ENCODE measurements at regions of chr4 and their contacts with region 1.

Region 1: GRCh38 chr4:119284876-119285780 is 36.8 kb downstream of the FABP2 start:
- DNase-seq: no peak
- ATAC-seq: peak; percentile 56

Region 2: GRCh38 chr4:118981839-118982381 is 303.2 kb before region 1 on chr4:
- intact Hi-C with region 1: loop called in 1 of 2 experiments (anchors 2 kb)
- DNase-seq: peak; percentile 53 to 54
- ATAC-seq: peak; percentile 98